Calu3 (cell line): ENCODE measurements at regions of chr5 and their contacts with region 1.

Region 1: DNA sequence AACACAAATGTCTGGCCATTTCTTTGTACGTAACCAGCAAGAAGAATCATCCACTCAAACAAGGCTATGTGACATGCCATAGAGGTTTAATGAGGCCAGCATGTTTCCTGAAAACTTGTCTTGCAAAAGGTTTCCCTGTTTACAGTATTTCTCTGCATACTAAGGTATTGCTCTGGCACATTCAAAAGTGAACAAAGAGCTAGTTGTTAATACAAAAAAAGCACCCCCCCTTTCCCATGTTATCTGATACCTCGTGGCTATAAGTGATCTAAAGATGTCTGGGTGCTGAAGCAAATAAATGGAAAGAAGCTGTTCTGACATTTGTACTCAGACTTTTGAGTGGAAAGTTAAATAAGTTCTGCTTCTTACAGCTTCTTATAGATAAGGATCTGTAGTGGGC is 37.2 kb upstream of the ADAMTS19 start:
- DNase-seq: peak; percentile 6
- H3K4me3 Mint-ChIP-seq: no peak overlapping the region
- H3K27ac Mint-ChIP-seq: no peak overlapping the region
- H3K4me1 Mint-ChIP-seq: no peaks in the 10 kb centered on the region
- H3K27me3 Mint-ChIP-seq: no peaks in the 10 kb centered on the region
- CTCF ChIP-seq: no peak

Region 2: GRCh38 chr5:127839496-127840197 is 1583.3 kb before region 1 on chr5:
- CTCF ChIA-PET with region 1: no interaction called
- intact Hi-C with region 1: loop called (anchors 10 kb)
- DNase-seq: no peak
- H3K4me3 Mint-ChIP-seq: no peak overlapping the region
- H3K27ac Mint-ChIP-seq: peak overlapping the region; percentile 4
- H3K4me1 Mint-ChIP-seq: peaks cover 44% of the 10 kb centered on the region
- H3K27me3 Mint-ChIP-seq: no peaks in the 10 kb centered on the region
- CTCF ChIP-seq: no peak

Region 3: GRCh38 chr5:129438324-129438887 is 15.5 kb after region 1 on chr5:
- CTCF ChIA-PET with region 1: no interaction called
- intact Hi-C with region 1: no loop called
- DNase-seq: no peak
- H3K4me3 Mint-ChIP-seq: no peak overlapping the region
- H3K27ac Mint-ChIP-seq: no peak overlapping the region
- H3K4me1 Mint-ChIP-seq: no peaks in the 10 kb centered on the region
- H3K27me3 Mint-ChIP-seq: no peaks in the 10 kb centered on the region
- CTCF ChIP-seq: no peak